ENCODE measurements at regions of chr4 and their contacts with region 1.

Region 1: GRCh38 chr4:108172753-108173598 is 4.2 kb upstream of the LEF1 start:
- DNase-seq: peak; percentile 70
- H3K4me3 Mint-ChIP-seq: peak overlapping the region; percentile 91
- H3K27ac Mint-ChIP-seq: peak overlapping the region; percentile 94
- H3K4me1 Mint-ChIP-seq: peaks cover 61% of the 10 kb centered on the region
- H3K27me3 Mint-ChIP-seq: peaks cover 12% of the 10 kb centered on the region

Region 2: GRCh38 chr4:107449611-107450369 is 723.2 kb before region 1 on chr4:
- intact Hi-C with region 1: no loop called
- DNase-seq: no peak
- H3K4me3 Mint-ChIP-seq: no peak overlapping the region
- H3K27ac Mint-ChIP-seq: no peak overlapping the region
- H3K4me1 Mint-ChIP-seq: no peaks in the 10 kb centered on the region
- H3K27me3 Mint-ChIP-seq: peaks cover 4% of the 10 kb centered on the region

Region 3: GRCh38 chr4:107719922-107720722 is 452.9 kb before region 1 on chr4 and contains the start of gene PAPSS1:
- intact Hi-C with region 1: loop called (anchors 5 kb)
- DNase-seq: peak; percentile 93
- H3K4me3 Mint-ChIP-seq: peak within 1 kb of the TSS; percentile 94
- H3K27ac Mint-ChIP-seq: peak within 1 kb of the TSS; percentile 90
- H3K4me1 Mint-ChIP-seq: peaks cover 33% of the 10 kb centered on the region
- H3K27me3 Mint-ChIP-seq: no peaks in the 10 kb centered on the region
- total RNA-seq, gene PAPSS1: 35.0 and 36.0 TPM in 2 replicates

Region 4: GRCh38 chr4:108204518-108204917 is 31.5 kb after region 1 on chr4:
- intact Hi-C with region 1: loop called (anchors 2 kb)
- DNase-seq: no peak
- H3K4me3 Mint-ChIP-seq: no peak overlapping the region
- H3K27ac Mint-ChIP-seq: no peak overlapping the region
- H3K4me1 Mint-ChIP-seq: peaks cover 20% of the 10 kb centered on the region
- H3K27me3 Mint-ChIP-seq: no peaks in the 10 kb centered on the region

Region 5: GRCh38 chr4:108355186-108355901 is 182.4 kb after region 1 on chr4:
- intact Hi-C with region 1: loop called (anchors 5 kb)
- DNase-seq: peak; percentile 54
- H3K4me3 Mint-ChIP-seq: peak overlapping the region; percentile 76
- H3K27ac Mint-ChIP-seq: peak overlapping the region; percentile 30
- H3K4me1 Mint-ChIP-seq: peaks cover 74% of the 10 kb centered on the region
- H3K27me3 Mint-ChIP-seq: peaks cover 5% of the 10 kb centered on the region

Region 6: GRCh38 chr4:108512615-108513505 is 339.9 kb after region 1 on chr4:
- intact Hi-C with region 1: loop called (anchors 5 kb)
- DNase-seq: peak; percentile 25
- H3K4me3 Mint-ChIP-seq: peak overlapping the region; percentile 49
- H3K27ac Mint-ChIP-seq: no peak overlapping the region
- H3K4me1 Mint-ChIP-seq: peaks cover 19% of the 10 kb centered on the region
- H3K27me3 Mint-ChIP-seq: peaks cover 8% of the 10 kb centered on the region

Region 7: DNA sequence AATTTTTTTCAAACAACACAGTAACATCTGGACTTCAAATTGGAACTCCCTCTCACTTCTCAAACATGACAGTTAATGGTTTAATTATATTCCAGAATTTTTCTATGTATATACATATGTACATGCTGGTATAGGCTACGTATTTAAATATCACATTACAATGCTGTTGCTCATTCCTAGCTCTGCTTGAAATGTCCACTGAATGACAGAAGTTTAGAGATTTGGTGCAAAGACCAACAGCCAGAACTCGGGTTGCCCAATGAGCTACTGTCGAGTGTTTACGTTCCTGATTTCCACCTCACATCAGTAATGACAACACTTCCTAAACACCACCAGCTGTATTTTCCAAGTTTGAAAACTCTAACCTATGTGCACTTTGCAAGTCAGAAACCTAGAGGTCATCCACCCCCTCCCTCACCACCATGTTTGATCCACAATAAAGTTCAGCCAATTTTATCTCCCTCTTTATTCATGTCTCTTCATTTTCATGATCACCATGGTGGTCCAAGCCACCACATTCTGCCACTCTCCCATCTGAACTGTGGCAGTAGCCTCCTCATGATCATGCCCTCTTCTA is 398.1 kb after region 1 on chr4:
- intact Hi-C with region 1: loop called (anchors 1 kb)
- DNase-seq: no peak
- H3K4me3 Mint-ChIP-seq: no peak overlapping the region
- H3K27ac Mint-ChIP-seq: no peak overlapping the region
- H3K4me1 Mint-ChIP-seq: peaks cover 19% of the 10 kb centered on the region
- H3K27me3 Mint-ChIP-seq: no peaks in the 10 kb centered on the region

Measured in activated T-helper 1 cell treated with anti-CD3 and anti-CD28 coated beads, Interleukin-12 subunit alpha, Interleukin-12 subunit beta, Interleukin-2, Interleukin-4 antibody, amounts not matched to agents 30 ng/mL and 10 ng/mL and 1 ng/mL, durations not matched to agents 14 hours and 24 hours and 36 hours (primary cell).